ENCODE measurements at regions of chr17 and their contacts with region 1.

Region 1: GRCh38 chr17:31549525-31550388 is 158.3 kb downstream of the RAB11FIP4 start:
- DNase-seq: peak; percentile 94
- ATAC-seq: peak; percentile 83
- H3K4me3 ChIP-seq: peak overlapping the region; percentile 79 to 91 (median 82)
- H3K4me3 Mint-ChIP-seq: peak overlapping the region; percentile 93
- H3K27ac ChIP-seq: peak overlapping the region; percentile 44 to 70
- H3K27ac Mint-ChIP-seq: peak overlapping the region; percentile 94
- H3K4me1 ChIP-seq: peaks cover 11 to 15% of the 10 kb centered on the region in 2 donors
- H3K4me1 Mint-ChIP-seq: peaks cover 28% of the 10 kb centered on the region
- H3K27me3 ChIP-seq: no peaks in the 10 kb centered on the region
- H3K27me3 Mint-ChIP-seq: no peaks in the 10 kb centered on the region
- CTCF ChIP-seq: no peak

Region 2: GRCh38 chr17:31394544-31394943 is 155.2 kb before region 1 on chr17:
- CTCF ChIA-PET with region 1: no interaction called
- POLR2A ChIA-PET with region 1: no interaction called
- intact Hi-C with region 1: no loop called
- DNase-seq: peak; percentile 40
- ATAC-seq: no peak
- H3K4me3 ChIP-seq: no peak overlapping the region
- H3K4me3 Mint-ChIP-seq: no peak overlapping the region
- H3K27ac ChIP-seq: no peak overlapping the region
- H3K27ac Mint-ChIP-seq: no peak overlapping the region
- H3K4me1 ChIP-seq: peaks cover 13 to 15% of the 10 kb centered on the region in 2 donors
- H3K4me1 Mint-ChIP-seq: peaks cover 14% of the 10 kb centered on the region
- H3K27me3 ChIP-seq: peaks cover 0 to 40% (median 20%) of the 10 kb centered on the region in 4 experiments
- H3K27me3 Mint-ChIP-seq: peaks cover 63% of the 10 kb centered on the region
- CTCF ChIP-seq: no peak

Region 3: DNA sequence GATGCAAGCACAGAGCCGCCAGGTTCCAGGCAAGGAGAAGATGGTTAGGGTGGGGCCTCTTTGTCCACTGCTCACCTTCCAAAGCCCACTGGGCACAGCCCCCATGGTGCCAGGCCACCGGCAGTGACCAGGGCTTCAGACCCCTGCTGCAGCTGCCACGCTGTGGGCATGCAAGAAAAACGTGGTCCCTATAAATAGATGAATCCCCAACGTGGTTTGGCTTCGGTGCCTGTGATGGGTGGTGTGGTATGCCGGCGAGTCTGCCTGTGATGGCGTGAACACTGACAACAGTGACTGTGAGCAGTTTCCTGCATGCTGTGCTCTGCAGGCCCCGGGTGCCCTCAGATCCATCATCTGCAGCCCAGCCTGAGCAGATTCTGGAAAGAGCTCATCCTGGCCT is 121.6 kb before region 1 on chr17:
- CTCF ChIA-PET with region 1: no interaction called
- POLR2A ChIA-PET with region 1: no interaction called
- intact Hi-C with region 1: no loop called
- DNase-seq: no peak
- ATAC-seq: no peak
- H3K4me3 ChIP-seq: no peak overlapping the region
- H3K4me3 Mint-ChIP-seq: no peak overlapping the region
- H3K27ac ChIP-seq: no peak overlapping the region
- H3K27ac Mint-ChIP-seq: no peak overlapping the region
- H3K4me1 ChIP-seq: peaks cover 0 to 1% of the 10 kb centered on the region in 2 donors
- H3K4me1 Mint-ChIP-seq: peaks cover 1% of the 10 kb centered on the region
- H3K27me3 ChIP-seq: peaks cover 0 to 18% (median 0%) of the 10 kb centered on the region in 4 experiments
- H3K27me3 Mint-ChIP-seq: peaks cover 35% of the 10 kb centered on the region
- CTCF ChIP-seq: no peak

Region 4: GRCh38 chr17:31533546-31534155 is 16.1 kb before region 1 on chr17:
- CTCF ChIA-PET with region 1: interaction called, 9 read pairs
- POLR2A ChIA-PET with region 1: interaction called, 6 read pairs
- intact Hi-C with region 1: loop called (anchors 1 kb)
- DNase-seq: no peak
- ATAC-seq: no peak
- H3K4me3 ChIP-seq: no peak overlapping the region
- H3K4me3 Mint-ChIP-seq: no peak overlapping the region
- H3K27ac ChIP-seq: no peak overlapping the region
- H3K27ac Mint-ChIP-seq: no peak overlapping the region
- H3K4me1 ChIP-seq: peaks cover 41 to 53% of the 10 kb centered on the region in 2 donors
- H3K4me1 Mint-ChIP-seq: peaks cover 45% of the 10 kb centered on the region
- H3K27me3 ChIP-seq: no peaks in the 10 kb centered on the region
- H3K27me3 Mint-ChIP-seq: no peaks in the 10 kb centered on the region
- CTCF ChIP-seq: no peak